Calu3 (cell line): ENCODE measurements at regions of chr10 and their contacts with region 1.

Region 1: GRCh38 chr10:73879296-73880173 is 5.2 kb upstream of the CAMK2G start:
- DNase-seq: peak; percentile 93
- H3K4me3 Mint-ChIP-seq: no peak overlapping the region
- H3K27ac Mint-ChIP-seq: peak overlapping the region; percentile 22
- H3K4me1 Mint-ChIP-seq: peaks cover 43% of the 10 kb centered on the region
- H3K27me3 Mint-ChIP-seq: no peaks in the 10 kb centered on the region
- CTCF ChIP-seq: peak; percentile 95

Region 2: GRCh38 chr10:73772280-73773151 is 107.0 kb before region 1 on chr10:
- CTCF ChIA-PET with region 1: interaction called, 3 read pairs
- intact Hi-C with region 1: loop called (anchors 10 kb)
- DNase-seq: peak; percentile 82
- H3K4me3 Mint-ChIP-seq: peak overlapping the region; percentile 93
- H3K27ac Mint-ChIP-seq: peak overlapping the region; percentile 35
- H3K4me1 Mint-ChIP-seq: peaks cover 24% of the 10 kb centered on the region
- H3K27me3 Mint-ChIP-seq: no peaks in the 10 kb centered on the region
- CTCF ChIP-seq: no peak

Region 3: DNA sequence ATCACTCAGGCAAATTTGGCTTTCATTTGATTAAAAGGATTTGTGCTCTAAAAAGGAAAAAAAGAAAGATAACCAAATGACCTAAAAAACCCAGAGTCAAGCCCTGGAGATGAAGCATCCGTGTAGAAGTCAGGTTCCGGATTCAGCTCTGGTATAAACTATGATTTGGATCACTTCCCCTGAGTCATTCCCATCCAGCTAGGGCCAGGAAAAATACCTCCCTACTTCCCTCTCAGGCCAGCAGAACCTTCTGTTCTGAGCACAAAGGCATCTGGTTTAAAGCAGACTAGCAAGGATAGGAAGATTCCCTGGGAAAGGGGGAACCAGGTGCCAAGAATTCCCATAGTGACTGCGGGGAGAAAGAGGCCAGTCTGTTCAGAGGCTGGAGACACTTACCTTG is 42.5 kb before region 1 on chr10:
- CTCF ChIA-PET with region 1: no interaction called
- intact Hi-C with region 1: no loop called
- DNase-seq: no peak
- H3K4me3 Mint-ChIP-seq: no peak overlapping the region
- H3K27ac Mint-ChIP-seq: no peak overlapping the region
- H3K4me1 Mint-ChIP-seq: no peaks in the 10 kb centered on the region
- H3K27me3 Mint-ChIP-seq: no peaks in the 10 kb centered on the region
- CTCF ChIP-seq: no peak

Region 4: GRCh38 chr10:73848821-73849489 is 30.6 kb before region 1 on chr10:
- CTCF ChIA-PET with region 1: interaction called, 20 read pairs
- intact Hi-C with region 1: loop called (anchors 2 kb)
- DNase-seq: peak; percentile 91
- H3K4me3 Mint-ChIP-seq: no peak overlapping the region
- H3K27ac Mint-ChIP-seq: no peak overlapping the region
- H3K4me1 Mint-ChIP-seq: peaks cover 1% of the 10 kb centered on the region
- H3K27me3 Mint-ChIP-seq: no peaks in the 10 kb centered on the region
- CTCF ChIP-seq: peak; percentile 99

Region 5: GRCh38 chr10:73931767-73932619 is 52.5 kb after region 1 on chr10:
- CTCF ChIA-PET with region 1: interaction called, 11 read pairs
- intact Hi-C with region 1: no loop called
- DNase-seq: peak; percentile 94
- H3K4me3 Mint-ChIP-seq: peak overlapping the region; percentile 20
- H3K27ac Mint-ChIP-seq: peak overlapping the region; percentile 99
- H3K4me1 Mint-ChIP-seq: peaks cover 68% of the 10 kb centered on the region
- H3K27me3 Mint-ChIP-seq: no peaks in the 10 kb centered on the region
- CTCF ChIP-seq: no peak

Region 6: DNA sequence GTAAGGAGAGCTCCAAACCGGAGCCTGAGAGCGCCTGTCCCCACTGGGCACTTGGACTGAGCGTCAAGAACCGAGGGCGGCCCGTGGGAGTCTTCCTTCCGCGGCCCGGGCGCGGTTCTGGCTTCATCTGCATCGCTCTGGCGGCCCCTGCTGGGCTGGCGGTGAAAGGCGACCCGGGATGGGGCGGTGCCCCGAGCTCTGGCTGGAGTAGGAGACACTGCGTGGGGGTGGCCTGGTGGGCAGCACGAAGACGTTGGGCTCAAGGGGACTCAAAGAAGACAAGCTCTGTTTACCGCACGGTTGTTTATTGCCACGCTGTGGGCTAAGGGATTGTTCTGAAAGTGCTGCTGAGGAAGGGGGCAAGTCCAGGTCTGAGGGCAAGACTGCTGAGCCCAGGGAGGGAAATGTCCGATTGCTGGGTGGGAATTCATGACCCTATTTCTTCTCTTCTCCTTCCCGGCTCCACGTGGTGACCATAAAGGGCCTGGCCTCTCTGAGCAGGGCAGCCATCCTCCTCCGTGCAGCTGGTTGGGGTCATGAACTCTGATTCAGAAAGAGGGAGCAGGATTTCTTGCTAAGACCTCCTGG is 61.2 kb after region 1 on chr10:
- CTCF ChIA-PET with region 1: interaction called, 12 read pairs
- intact Hi-C with region 1: no loop called
- DNase-seq: peak; percentile 96
- H3K4me3 Mint-ChIP-seq: peak overlapping the region; percentile 62
- H3K27ac Mint-ChIP-seq: peak overlapping the region; percentile 82
- H3K4me1 Mint-ChIP-seq: peaks cover 39% of the 10 kb centered on the region
- H3K27me3 Mint-ChIP-seq: no peaks in the 10 kb centered on the region
- CTCF ChIP-seq: peak; percentile 97

Region 7: GRCh38 chr10:74071157-74071556 is 191.6 kb after region 1 on chr10:
- CTCF ChIA-PET with region 1: no interaction called
- intact Hi-C with region 1: no loop called
- DNase-seq: no peak
- H3K4me3 Mint-ChIP-seq: no peak overlapping the region
- H3K27ac Mint-ChIP-seq: peak overlapping the region; percentile 86
- H3K4me1 Mint-ChIP-seq: peaks cover 85% of the 10 kb centered on the region
- H3K27me3 Mint-ChIP-seq: no peaks in the 10 kb centered on the region
- CTCF ChIP-seq: no peak